ENCODE measurements at regions of chrX and their contacts with region 1.

Region 1: GRCh38 chrX:3651276-3651675 is 62.2 kb downstream of the PRKX start:
- DNase-seq: no peak
- H3K4me3 Mint-ChIP-seq: no peak overlapping the region
- H3K27ac Mint-ChIP-seq: peak overlapping the region; percentile 42
- H3K4me1 Mint-ChIP-seq: peaks cover 10% of the 10 kb centered on the region
- H3K27me3 Mint-ChIP-seq: no peaks in the 10 kb centered on the region

Region 2: GRCh38 chrX:3666975-3667374 is 15.7 kb after region 1 on chrX:
- CTCF ChIA-PET with region 1: no interaction called
- DNase-seq: no peak
- H3K4me3 Mint-ChIP-seq: no peak overlapping the region
- H3K27ac Mint-ChIP-seq: no peak overlapping the region
- H3K4me1 Mint-ChIP-seq: peaks cover 11% of the 10 kb centered on the region
- H3K27me3 Mint-ChIP-seq: no peaks in the 10 kb centered on the region

Region 3: GRCh38 chrX:3678328-3678727 is 27.1 kb after region 1 on chrX:
- CTCF ChIA-PET with region 1: no interaction called
- DNase-seq: no peak
- H3K4me3 Mint-ChIP-seq: no peak overlapping the region
- H3K27ac Mint-ChIP-seq: peak overlapping the region; percentile 13
- H3K4me1 Mint-ChIP-seq: peaks cover 30% of the 10 kb centered on the region
- H3K27me3 Mint-ChIP-seq: no peaks in the 10 kb centered on the region

Region 4: DNA sequence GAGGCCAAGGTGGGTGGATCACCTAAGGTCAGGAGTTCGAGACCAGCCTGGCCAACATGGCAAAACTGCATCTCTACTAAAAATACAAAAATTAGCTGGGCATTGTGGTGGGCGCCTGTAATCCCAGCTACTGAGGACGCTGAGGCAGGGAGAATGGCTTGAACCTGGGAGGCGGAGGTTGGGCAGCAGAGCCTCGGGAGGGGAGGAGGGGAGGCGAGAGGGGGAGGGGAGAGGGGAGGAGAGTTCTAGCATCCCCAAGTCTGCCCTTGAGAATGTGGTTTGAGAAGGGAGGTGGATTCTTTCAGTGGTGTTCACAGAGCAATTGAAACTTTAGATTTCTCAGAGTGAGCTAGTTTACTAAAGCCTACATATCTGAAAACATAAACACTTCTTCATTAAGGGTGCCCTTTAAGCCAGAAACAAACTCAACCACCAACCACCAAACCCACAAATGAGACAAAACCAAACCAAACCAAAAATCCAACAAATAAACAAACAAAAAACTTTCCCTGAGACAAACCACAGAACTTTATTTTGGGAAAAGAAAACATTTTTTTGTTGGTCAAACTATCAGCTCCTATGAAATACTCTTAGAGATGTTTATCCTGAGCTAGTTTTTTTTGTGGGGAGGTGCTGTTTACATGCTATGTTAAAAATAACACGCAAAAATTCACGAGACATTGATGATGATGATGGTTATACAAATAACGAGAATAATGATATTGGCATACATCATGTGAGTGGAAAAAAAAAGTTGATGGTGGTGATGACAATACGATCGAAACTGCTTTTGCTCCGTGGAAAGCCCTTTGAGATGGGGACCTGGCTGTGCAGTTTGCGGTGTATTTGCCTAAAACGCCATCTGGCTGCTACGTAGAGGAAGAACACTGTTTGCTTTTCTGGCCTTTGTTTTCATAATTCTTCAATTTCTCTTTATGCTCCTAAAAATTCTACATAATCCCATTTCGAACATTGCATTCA is 160.3 kb after region 1 on chrX:
- CTCF ChIA-PET with region 1: interaction called, 20 read pairs
- DNase-seq: peak; percentile 63
- H3K4me3 Mint-ChIP-seq: peak overlapping the region; percentile 28
- H3K27ac Mint-ChIP-seq: peak overlapping the region; percentile 78
- H3K4me1 Mint-ChIP-seq: peaks cover 34% of the 10 kb centered on the region
- H3K27me3 Mint-ChIP-seq: peaks cover 25% of the 10 kb centered on the region

Measured in activated naive CD4-positive, alpha-beta T cell treated with anti-CD3 and anti-CD28 coated beads, Interleukin-2, amount 10 ng/mL, durations not matched to agents 7 days and 5 days (primary cell).